ENCODE measurements at regions of chr4 and their contacts with region 1.

Region 1: GRCh38 chr4:139795527-139796309 is 130.1 kb downstream of the MGST2 start:
- DNase-seq: no peak
- H3K4me3 Mint-ChIP-seq: no peak overlapping the region
- H3K27ac Mint-ChIP-seq: no peak overlapping the region
- H3K4me1 Mint-ChIP-seq: no peaks in the 10 kb centered on the region
- H3K27me3 Mint-ChIP-seq: no peaks in the 10 kb centered on the region
- CTCF ChIP-seq: no peak

Region 2: GRCh38 chr4:139582044-139582443 is 213.7 kb before region 1 on chr4:
- CTCF ChIA-PET with region 1: no interaction called
- intact Hi-C with region 1: no loop called
- DNase-seq: no peak
- H3K4me3 Mint-ChIP-seq: no peak overlapping the region
- H3K27ac Mint-ChIP-seq: no peak overlapping the region
- H3K4me1 Mint-ChIP-seq: no peaks in the 10 kb centered on the region
- H3K27me3 Mint-ChIP-seq: no peaks in the 10 kb centered on the region
- CTCF ChIP-seq: no peak

Region 3: DNA sequence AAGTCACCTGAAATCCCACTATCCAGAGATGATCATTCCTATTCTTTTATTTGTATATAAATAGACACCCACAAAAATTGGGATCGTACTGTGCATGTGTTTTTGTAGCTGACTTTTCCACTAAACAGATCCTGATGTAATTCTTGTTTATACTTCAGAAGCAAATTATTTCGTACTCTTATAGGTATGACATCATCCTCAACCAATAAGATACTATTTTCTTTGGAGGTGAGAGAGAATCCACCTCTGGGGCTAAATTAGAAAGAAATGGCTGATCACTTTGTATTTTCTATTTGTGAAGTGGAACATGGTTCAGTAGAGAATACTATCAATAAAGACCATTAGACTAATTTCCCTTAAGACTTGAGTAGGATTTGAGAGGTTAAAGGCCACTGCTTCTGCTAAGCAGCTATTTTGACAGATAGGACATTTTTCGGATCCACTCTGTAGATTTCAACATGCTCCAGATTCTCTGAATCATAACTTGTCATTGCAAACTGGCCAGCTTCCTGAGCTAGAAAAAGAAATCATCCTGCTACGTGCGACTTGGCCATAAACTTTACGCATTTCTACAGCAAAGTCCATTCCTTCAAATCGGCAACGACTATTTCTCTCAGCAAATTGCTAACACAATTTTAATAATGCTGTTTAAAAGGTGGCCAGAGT is 75.0 kb before region 1 on chr4:
- CTCF ChIA-PET with region 1: no interaction called
- intact Hi-C with region 1: no loop called
- DNase-seq: no peak
- H3K4me3 Mint-ChIP-seq: no peak overlapping the region
- H3K27ac Mint-ChIP-seq: no peak overlapping the region
- H3K4me1 Mint-ChIP-seq: no peaks in the 10 kb centered on the region
- H3K27me3 Mint-ChIP-seq: no peaks in the 10 kb centered on the region
- CTCF ChIP-seq: no peak

Region 4: DNA sequence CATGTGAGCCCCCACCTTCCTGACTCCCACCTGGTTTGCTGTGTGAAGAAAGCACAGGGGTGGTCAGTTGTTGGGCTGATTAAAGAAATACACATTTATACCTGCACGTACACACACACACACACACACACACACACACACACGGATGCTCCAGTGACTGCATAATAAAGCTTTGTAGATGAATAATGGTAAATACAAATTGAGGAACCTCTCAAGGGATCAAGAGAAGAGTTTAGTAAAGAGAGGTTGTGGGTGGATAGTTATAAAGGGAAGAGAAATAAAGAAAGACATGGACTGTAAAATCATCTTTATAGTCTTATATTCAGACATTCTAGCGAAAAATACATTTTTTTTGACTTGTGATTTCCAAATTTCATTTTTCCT is 14.0 kb after region 1 on chr4:
- CTCF ChIA-PET with region 1: interaction called, 14 read pairs
- intact Hi-C with region 1: no loop called
- DNase-seq: no peak
- H3K4me3 Mint-ChIP-seq: no peak overlapping the region
- H3K27ac Mint-ChIP-seq: no peak overlapping the region
- H3K4me1 Mint-ChIP-seq: no peaks in the 10 kb centered on the region
- H3K27me3 Mint-ChIP-seq: no peaks in the 10 kb centered on the region
- CTCF ChIP-seq: no peak

Measured in Calu3 (cell line).